ENCODE measurements at regions of chr9 and their contacts with region 1.

Region 1: DNA sequence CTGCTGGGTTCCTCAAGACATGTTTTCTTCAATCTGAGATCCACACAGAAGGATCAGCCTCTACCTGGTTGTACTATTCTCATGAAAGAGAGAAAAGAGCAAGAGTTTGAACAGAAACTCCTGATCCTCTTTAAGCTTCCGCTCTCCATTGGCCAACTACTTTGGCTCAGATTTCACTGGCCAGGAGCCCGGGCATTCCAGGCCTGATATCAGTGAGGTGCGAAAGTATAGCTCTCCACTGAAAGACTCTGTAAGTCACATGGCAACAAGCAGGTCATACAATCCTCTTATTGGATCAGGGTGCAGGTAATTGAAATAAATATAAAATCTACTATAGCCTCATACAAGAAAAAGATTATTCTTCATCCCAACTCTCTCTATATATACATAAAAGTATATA is 920.5 kb downstream of the TLE4 start:
- DNase-seq: no peak
- CTCF ChIP-seq: no peak

Region 2: DNA sequence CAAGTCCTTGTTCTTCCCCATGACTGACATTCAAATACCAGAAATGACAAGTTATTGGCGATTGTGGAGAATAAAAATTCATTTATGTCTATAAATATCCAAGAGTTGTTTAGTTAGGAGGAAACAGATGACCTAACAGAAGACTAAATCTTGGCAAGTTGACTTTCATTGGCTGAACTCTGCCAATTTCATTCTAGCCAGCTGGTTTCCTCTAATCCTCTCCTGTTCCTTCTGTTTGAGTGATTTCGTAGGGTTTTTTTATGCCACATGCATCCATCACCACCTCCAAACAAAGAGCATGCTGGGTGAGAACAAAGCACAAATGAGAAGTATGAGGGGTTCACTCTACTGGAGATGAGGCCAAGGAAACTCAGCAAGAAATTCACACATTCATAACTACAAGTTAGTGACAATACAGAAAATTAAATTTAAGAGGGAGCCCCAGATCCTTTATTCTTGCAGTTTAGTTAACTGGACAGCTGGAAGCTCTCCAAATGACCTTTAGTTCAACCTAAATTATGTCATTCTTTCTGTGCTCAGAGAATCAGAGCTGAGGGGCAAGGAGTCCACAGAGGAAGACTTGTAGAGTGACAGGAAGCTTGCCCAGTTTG is 11.5 kb after region 1 on chr9:
- CTCF ChIA-PET with region 1: interaction called, 27 read pairs
- POLR2A ChIA-PET with region 1: no interaction called
- DNase-seq: no peak
- CTCF ChIP-seq: no peak

Region 3: GRCh38 chr9:80552931-80553330 is 60.7 kb after region 1 on chr9:
- CTCF ChIA-PET with region 1: no interaction called
- POLR2A ChIA-PET with region 1: no interaction called
- DNase-seq: no peak
- CTCF ChIP-seq: no peak

Measured in GM10248 (cell line).